ENCODE measurements at regions of chr17 and their contacts with region 1.

Region 1: GRCh38 chr17:409848-410545 is 57.4 kb upstream of the RPH3AL start:
- DNase-seq: peak; percentile 97 to 99 (median 97)
- H3K4me3 ChIP-seq: peak overlapping the region; percentile 52 to 89 (median 67)
- H3K27ac ChIP-seq: peak overlapping the region; percentile 46 to 81
- H3K4me1 ChIP-seq: peaks cover 4 to 51% (median 46%) of the 10 kb centered on the region in 4 experiments
- H3K27me3 ChIP-seq: no peaks in the 10 kb centered on the region

Region 2: GRCh38 chr17:438191-438590 is 28.2 kb after region 1 on chr17:
- CTCF ChIA-PET with region 1: interaction called, 12 read pairs
- POLR2A ChIA-PET with region 1: no interaction called
- DNase-seq: no peak
- H3K4me3 ChIP-seq: no peak overlapping the region
- H3K27ac ChIP-seq: no peak overlapping the region
- H3K4me1 ChIP-seq: no peaks in the 10 kb centered on the region
- H3K27me3 ChIP-seq: no peaks in the 10 kb centered on the region

Region 3: DNA sequence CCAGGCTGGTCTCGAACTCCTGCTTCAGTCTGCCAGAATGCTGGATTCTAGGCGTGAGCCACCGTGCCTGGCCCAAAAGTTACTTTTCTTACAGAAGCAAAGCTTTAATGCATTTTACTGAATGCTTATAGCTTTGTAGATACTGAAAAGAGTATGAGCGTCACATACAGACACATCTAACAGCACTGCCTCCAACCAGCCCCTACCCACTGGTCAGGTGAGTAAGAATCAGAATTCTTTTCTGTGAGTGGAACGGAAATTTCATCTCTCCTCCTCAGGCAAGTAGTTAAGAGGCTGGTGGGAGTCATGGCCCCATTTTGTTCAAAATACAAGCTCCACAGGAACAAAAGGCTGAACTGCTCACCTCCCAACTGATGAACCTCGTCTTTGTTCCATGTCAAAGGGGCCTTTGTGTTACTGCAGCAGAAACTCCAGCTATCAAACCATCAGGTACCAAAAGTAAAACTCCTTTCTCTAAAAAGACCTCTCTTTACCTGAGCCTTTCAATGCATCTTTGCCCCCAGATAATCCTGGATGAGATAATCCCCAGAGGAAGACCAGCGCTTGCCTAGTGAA is 35.0 kb after region 1 on chr17:
- CTCF ChIA-PET with region 1: interaction called, 12 read pairs
- POLR2A ChIA-PET with region 1: interaction called, 3 read pairs
- DNase-seq: no peak
- H3K4me3 ChIP-seq: no peak overlapping the region
- H3K27ac ChIP-seq: no peak overlapping the region
- H3K4me1 ChIP-seq: peaks cover 0 to 3% (median 0%) of the 10 kb centered on the region in 4 experiments
- H3K27me3 ChIP-seq: no peaks in the 10 kb centered on the region

Region 4: GRCh38 chr17:494601-495265 is 84.7 kb after region 1 on chr17:
- CTCF ChIA-PET with region 1: interaction called, 16 read pairs
- POLR2A ChIA-PET with region 1: interaction called, 5 read pairs
- DNase-seq: peak; percentile 39 to 74 (median 61)
- H3K4me3 ChIP-seq: peak overlapping the region in 4 of 7 experiments; percentile 13 to 59 (median 50)
- H3K27ac ChIP-seq: no peak overlapping the region
- H3K4me1 ChIP-seq: peaks cover 20 to 74% (median 65%) of the 10 kb centered on the region in 4 experiments
- H3K27me3 ChIP-seq: no peaks in the 10 kb centered on the region

Region 5: DNA sequence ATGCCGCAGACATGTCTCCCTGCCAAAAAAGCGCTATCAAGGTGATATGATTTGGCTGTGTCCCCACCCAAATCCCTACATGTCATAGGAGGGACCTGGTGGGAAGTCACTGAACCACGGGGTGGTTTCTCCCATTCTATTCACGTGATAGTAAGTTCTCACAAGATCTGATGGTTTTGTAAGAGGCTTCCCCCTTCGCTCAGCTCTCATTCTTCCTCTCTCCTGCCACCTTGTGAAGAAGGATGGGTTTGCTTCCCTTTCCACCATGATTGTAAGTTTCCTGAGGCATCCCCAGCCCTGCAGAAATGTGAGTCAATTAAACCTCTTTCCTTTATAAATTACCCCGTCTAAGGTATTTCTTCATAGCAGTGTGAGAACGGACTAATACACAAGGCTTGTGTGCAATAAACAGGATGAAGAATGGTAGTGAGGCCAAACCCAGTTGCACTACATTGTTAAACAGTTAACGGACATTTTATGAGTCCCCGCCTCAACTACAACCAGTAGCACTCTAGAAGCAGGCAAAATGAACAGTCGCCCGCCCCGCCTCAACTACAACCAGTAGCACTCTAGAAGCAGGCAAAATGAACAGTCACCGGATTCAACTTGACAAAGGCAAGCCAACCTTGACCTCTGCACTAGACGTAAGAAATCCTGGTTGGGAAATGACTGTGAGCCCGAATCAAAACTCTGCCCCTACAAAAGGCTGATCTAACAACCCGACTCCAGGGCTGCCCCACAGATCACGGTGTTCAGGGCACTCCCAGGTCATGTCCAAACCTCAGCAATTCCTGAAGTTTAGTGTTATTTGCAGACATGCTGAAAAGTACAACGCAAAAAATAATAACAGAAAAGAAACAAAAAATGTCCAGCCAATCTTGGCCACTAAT is 278.3 kb after region 1 on chr17:
- CTCF ChIA-PET with region 1: interaction called, 30 read pairs
- POLR2A ChIA-PET with region 1: interaction called, 4 read pairs
- DNase-seq: peak; percentile 76 to 81 (median 80)
- H3K4me3 ChIP-seq: no peak overlapping the region
- H3K27ac ChIP-seq: no peak overlapping the region
- H3K4me1 ChIP-seq: peaks cover 0 to 2% (median 0%) of the 10 kb centered on the region in 4 experiments
- H3K27me3 ChIP-seq: no peaks in the 10 kb centered on the region

Region 6: GRCh38 chr17:693791-694638 is 284.0 kb after region 1 on chr17:
- CTCF ChIA-PET with region 1: interaction called, 25 read pairs
- POLR2A ChIA-PET with region 1: no interaction called
- DNase-seq: no peak
- H3K4me3 ChIP-seq: no peak overlapping the region
- H3K27ac ChIP-seq: no peak overlapping the region
- H3K4me1 ChIP-seq: no peaks in the 10 kb centered on the region
- H3K27me3 ChIP-seq: no peaks in the 10 kb centered on the region

Region 7: GRCh38 chr17:700504-701094 is 290.6 kb after region 1 on chr17:
- CTCF ChIA-PET with region 1: interaction called, 25 read pairs
- POLR2A ChIA-PET with region 1: no interaction called
- DNase-seq: peak; percentile 38 to 75 (median 67)
- H3K4me3 ChIP-seq: no peak overlapping the region
- H3K27ac ChIP-seq: no peak overlapping the region
- H3K4me1 ChIP-seq: no peaks in the 10 kb centered on the region
- H3K27me3 ChIP-seq: no peaks in the 10 kb centered on the region

Measured in common myeloid progenitor, CD34-positive (primary cell).